GM12878 (cell line): ENCODE measurements at regions of chr16 and their contacts with region 1.

Region 1: GRCh38 chr16:47460711-47461597 is at the starts of genes ITFG1 and PHKB:
- DNase-seq: peak; percentile 69
- ATAC-seq: peak; percentile 75
- H3K4me3 ChIP-seq: peak within 1 kb of the TSS; percentile 85
- H3K27ac ChIP-seq: peak within 1 kb of the TSS; percentile 90
- H3K4me1 ChIP-seq: peaks cover 10% of the 10 kb centered on the region
- H3K27me3 ChIP-seq: no peaks in the 10 kb centered on the region
- CTCF ChIP-seq: peak in 1 of 3 experiments; percentile 22; a peak in 1 of 6 replicates
- EP300 ChIP-seq: no peak
- POLR2A ChIP-seq: peak; percentile 95
- RAD21 ChIP-seq: peak; percentile 31; the same call in 1 of the 2 replicates
- polyA plus RNA-seq, gene ITFG1: 9.3 to 15.9 TPM
- polyA plus RNA-seq, gene PHKB: 14.2 to 15.7 TPM

Region 2: DNA sequence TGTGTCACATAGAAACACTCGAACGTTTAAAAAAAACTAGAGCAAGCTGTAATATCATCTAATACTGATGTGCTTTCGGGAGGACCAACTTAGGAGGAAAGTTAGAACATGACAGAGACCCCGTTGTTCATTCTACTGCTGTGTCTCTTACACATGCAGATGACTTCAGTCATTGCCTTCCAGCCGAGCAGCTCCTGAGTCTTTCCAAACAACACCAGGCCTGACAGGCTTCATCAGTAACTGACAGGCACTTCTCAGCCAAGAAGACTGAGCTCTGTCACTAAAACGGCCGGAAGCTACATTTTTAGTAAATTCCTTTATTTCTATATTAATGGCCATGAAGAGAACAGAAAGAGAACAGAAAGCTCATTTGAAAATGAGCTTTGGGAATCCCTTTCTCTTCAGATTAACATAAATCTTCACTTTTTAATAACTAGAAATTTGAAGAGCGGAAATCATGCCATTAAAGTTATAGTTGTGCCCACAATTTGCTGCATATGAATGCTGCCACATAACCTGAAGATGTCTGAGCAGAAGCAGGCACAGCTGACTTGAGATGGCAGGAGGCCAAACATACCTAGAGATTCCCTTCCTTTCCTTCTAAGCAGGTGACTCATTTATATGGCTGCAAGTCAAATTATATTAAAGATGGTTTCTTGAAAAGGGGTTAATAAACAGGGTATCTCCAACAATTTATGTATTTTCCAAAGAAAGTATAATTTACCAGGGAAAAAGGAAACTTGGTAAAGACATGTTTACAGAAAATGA is 149.0 kb before region 1 on chr16:
- CTCF ChIA-PET with region 1: no interaction called
- POLR2A ChIA-PET with region 1: no interaction called
- RAD21 ChIA-PET with region 1: interaction called, 3 read pairs
- SMC1A ChIA-PET with region 1: interaction called, 5 read pairs
- in situ Hi-C with region 1: no loop called
- intact Hi-C with region 1: loop called (anchors 10 kb)
- DNase-seq: no peak
- ATAC-seq: no peak
- H3K4me3 ChIP-seq: no peak overlapping the region
- H3K27ac ChIP-seq: peak overlapping the region; percentile 64
- H3K4me1 ChIP-seq: peaks cover 11% of the 10 kb centered on the region; the same call in 1 of the 2 replicates
- H3K27me3 ChIP-seq: no peaks in the 10 kb centered on the region
- CTCF ChIP-seq: no peak
- EP300 ChIP-seq: no peak
- POLR2A ChIP-seq: no peak
- RAD21 ChIP-seq: no peak

Region 3: DNA sequence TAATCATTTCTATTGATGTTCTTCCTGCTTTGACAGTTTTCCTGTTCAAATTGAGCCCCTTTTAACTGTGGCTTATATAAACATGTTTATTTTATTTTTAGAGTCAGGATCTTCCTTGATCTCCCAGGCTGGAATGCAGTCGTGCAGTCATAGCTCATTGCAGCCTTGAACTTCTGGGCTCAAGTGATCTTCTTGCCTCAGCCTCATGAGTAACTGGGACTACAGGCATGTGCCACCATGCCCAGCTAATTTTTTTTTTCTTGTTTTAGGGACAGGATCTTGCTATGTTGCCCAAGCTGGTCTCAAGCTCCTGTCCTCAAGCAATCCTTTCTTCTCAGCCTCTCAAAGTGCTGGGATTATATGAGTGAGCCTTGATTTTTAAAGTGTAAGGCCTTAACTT is 14.8 kb after region 1 on chr16:
- CTCF ChIA-PET with region 1: interaction called, 50 read pairs
- POLR2A ChIA-PET with region 1: interaction called, 28 read pairs
- RAD21 ChIA-PET with region 1: interaction called, 102 read pairs
- SMC1A ChIA-PET with region 1: interaction called, 165 read pairs
- in situ Hi-C with region 1: no loop called
- intact Hi-C with region 1: no loop called
- DNase-seq: no peak
- ATAC-seq: no peak
- H3K4me3 ChIP-seq: no peak overlapping the region
- H3K27ac ChIP-seq: no peak overlapping the region
- H3K4me1 ChIP-seq: peaks cover 10% of the 10 kb centered on the region
- H3K27me3 ChIP-seq: no peaks in the 10 kb centered on the region
- CTCF ChIP-seq: no peak
- EP300 ChIP-seq: no peak
- POLR2A ChIP-seq: no peak
- RAD21 ChIP-seq: no peak

Region 4: DNA sequence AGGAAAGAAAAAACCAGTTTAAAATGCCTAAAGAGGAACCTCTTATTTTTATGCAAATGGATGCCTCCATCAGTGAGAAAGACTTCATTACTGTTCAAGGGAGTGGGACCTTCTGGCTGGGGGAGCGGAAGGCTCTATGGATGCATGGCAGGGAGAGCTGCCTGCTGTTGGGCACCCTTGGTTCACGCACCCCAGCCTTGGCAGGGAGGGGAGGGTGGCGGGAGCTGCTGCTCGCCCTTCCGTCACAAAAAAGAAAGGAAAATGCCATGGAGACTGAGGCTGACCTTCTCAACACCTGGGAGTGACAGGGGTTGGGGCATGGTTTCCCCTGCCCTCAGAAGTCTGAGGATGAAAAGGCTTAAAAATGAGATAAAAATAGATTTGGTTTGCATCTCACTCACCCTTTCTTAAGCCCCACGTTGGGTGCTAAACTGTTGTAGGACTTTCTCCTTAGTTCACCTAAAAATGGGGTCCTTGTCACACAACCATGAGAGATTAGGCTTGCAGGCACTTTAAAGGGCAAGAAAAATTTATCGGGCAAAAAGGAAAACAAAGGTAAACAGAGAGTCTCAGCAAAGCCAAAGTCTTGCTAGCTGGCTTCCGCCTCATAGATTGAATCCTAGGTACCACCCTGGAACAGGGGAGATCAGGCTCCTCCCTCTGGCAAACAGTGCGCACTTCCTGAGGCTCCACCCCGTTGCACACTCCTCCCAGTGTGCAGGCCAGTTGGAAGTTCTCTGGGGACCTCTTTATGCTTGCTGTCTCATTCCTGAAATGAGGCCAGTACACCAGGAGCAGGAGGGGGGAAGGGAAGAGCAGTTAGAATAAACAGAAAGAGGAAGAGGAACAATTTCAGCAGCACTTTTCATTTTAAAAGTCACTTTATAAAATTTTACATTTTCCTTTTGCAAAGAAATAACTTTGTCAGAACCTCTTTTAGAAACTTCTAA is 31.7 kb after region 1 on chr16:
- CTCF ChIA-PET with region 1: interaction called, 60 read pairs
- POLR2A ChIA-PET with region 1: interaction called, 38 read pairs
- RAD21 ChIA-PET with region 1: interaction called, 238 read pairs
- SMC1A ChIA-PET with region 1: interaction called, 254 read pairs
- in situ Hi-C with region 1: no loop called
- intact Hi-C with region 1: loop called (anchors 1 kb)
- DNase-seq: peak; percentile 76
- ATAC-seq: peak; percentile 95
- H3K4me3 ChIP-seq: peak overlapping the region; percentile 57
- H3K27ac ChIP-seq: peak overlapping the region; percentile 97
- H3K4me1 ChIP-seq: peaks cover 29% of the 10 kb centered on the region
- H3K27me3 ChIP-seq: no peaks in the 10 kb centered on the region
- CTCF ChIP-seq: no peak
- EP300 ChIP-seq: peak; percentile 55 to 61; a peak in 3 of 4 replicates
- POLR2A ChIP-seq: peak; percentile 58
- RAD21 ChIP-seq: no peak

Region 5: GRCh38 chr16:47523342-47524006 is 62.5 kb after region 1 on chr16:
- CTCF ChIA-PET with region 1: no interaction called
- POLR2A ChIA-PET with region 1: interaction called, 7 read pairs
- RAD21 ChIA-PET with region 1: interaction called, 24 read pairs
- SMC1A ChIA-PET with region 1: interaction called, 16 read pairs
- in situ Hi-C with region 1: no loop called
- intact Hi-C with region 1: no loop called
- DNase-seq: peak; percentile 78
- ATAC-seq: peak; percentile 100
- H3K4me3 ChIP-seq: no peak overlapping the region
- H3K27ac ChIP-seq: peak overlapping the region; percentile 26
- H3K4me1 ChIP-seq: peaks cover 6% of the 10 kb centered on the region; the same call in 1 of the 2 replicates
- H3K27me3 ChIP-seq: no peaks in the 10 kb centered on the region
- CTCF ChIP-seq: no peak
- EP300 ChIP-seq: peak in 1 of 2 experiments; percentile 79; a peak in 1 of 4 replicates
- POLR2A ChIP-seq: no peak
- RAD21 ChIP-seq: 0 out of 2 replicates have a peak, but pooled peaks have one; percentile 13

Region 6: DNA sequence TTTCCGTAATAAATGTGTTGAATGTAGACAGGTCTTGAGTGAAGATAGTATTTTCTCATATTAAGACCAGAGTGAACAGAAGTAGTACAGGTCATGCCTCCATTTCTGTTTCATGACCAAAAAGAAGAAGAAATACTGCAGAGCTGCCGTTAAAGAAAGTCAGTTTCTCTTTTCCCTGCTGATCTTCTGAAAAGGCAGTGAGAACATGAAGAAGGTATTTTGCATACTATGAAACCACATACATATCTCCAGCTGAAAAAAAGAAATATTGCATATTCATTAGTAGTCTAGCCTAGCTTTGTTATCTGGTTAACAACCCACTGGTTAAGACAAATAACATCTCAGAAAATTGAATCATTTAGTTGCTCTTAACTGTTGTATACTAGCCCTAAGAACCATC is 138.6 kb after region 1 on chr16:
- CTCF ChIA-PET with region 1: no interaction called
- POLR2A ChIA-PET with region 1: no interaction called
- RAD21 ChIA-PET with region 1: interaction called, 11 read pairs
- SMC1A ChIA-PET with region 1: interaction called, 4 read pairs
- in situ Hi-C with region 1: no loop called
- intact Hi-C with region 1: no loop called
- DNase-seq: peak; percentile 28
- ATAC-seq: peak; percentile 70
- H3K4me3 ChIP-seq: no peak overlapping the region
- H3K27ac ChIP-seq: peak overlapping the region; percentile 66
- H3K4me1 ChIP-seq: no peaks in the 10 kb centered on the region; the same call in 1 of the 2 replicates
- H3K27me3 ChIP-seq: no peaks in the 10 kb centered on the region
- CTCF ChIP-seq: no peak
- EP300 ChIP-seq: no peak
- POLR2A ChIP-seq: no peak
- RAD21 ChIP-seq: no peak

Region 7: DNA sequence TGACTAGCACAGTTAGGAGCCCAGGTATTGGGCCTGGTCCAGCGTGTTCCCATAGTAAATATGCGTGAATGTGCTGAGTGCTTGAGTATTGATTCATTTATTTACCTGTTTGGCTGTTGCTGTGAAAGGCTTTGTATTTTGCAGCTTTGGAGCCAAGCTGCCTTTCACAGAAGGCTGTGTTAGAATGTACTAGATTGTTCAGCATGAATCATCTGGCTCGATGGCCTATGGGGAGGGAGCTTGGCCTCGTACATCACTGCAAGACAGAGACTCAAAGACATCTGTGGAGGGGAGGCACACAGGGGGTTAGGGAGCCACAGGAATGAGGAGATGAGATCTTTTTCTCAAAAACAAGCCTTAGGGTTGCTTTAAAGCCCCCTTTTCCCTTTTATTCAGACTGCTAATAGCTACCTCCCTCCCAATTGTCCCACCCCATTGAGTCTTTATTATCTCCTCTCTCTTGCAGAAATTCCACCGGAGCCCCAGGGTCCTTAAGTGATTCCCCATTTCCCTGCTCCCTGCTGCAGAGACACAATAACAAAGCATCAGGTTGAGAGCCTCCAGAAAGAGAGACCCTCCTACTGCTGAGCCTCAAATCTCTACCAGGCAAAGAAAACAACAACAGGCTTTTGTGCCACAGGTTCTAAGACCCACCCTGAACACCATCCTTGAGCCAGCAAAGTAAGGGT is 387.6 kb after region 1 on chr16:
- CTCF ChIA-PET with region 1: no interaction called
- POLR2A ChIA-PET with region 1: no interaction called
- RAD21 ChIA-PET with region 1: no interaction called
- SMC1A ChIA-PET with region 1: no interaction called
- in situ Hi-C with region 1: no loop called
- intact Hi-C with region 1: no loop called
- DNase-seq: no peak
- ATAC-seq: no peak
- H3K4me3 ChIP-seq: no peak overlapping the region
- H3K27ac ChIP-seq: no peak overlapping the region
- H3K4me1 ChIP-seq: no peaks in the 10 kb centered on the region
- H3K27me3 ChIP-seq: no peaks in the 10 kb centered on the region
- CTCF ChIP-seq: no peak
- EP300 ChIP-seq: no peak
- POLR2A ChIP-seq: no peak
- RAD21 ChIP-seq: no peak